Endothelial cell of umbilical vein (primary cell): ENCODE measurements at regions of chr7 and their contacts with region 1.

Region 1: DNA sequence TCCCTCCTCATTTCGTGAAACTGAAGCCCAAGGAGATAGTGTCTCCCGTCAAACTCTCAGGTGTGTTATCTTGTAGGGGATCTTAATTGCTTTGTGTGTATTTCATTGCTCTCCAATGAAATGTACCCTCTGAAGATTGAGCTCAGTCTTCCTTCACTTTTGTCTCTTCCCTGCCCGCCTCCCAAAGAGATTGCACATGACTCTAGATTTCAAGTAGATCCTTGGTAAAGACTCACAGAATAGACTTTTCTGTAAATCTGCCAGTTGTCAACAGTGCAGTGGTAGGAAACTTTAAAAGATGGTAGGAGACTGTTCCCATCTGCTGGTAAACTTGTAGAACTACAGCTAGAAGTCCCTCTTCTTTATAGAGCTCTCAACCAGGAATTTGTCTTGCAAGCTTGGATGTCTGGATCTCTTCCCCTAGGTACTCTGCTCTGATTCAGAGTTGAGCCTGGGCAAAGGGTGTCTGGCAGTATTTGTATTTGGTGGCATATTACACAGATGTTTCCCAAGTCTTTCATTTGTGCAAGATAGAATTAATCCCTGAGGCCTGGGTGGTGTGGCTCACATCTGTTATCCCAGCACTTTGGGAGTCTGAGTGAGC is 9.6 kb downstream of the CCL26 start:
- DNase-seq: peak; percentile 58
- H3K4me3 ChIP-seq: no peak overlapping the region
- H3K27ac ChIP-seq: no peak overlapping the region
- H3K4me1 ChIP-seq: no peaks in the 10 kb centered on the region
- H3K27me3 ChIP-seq: no peaks in the 10 kb centered on the region
- CTCF ChIP-seq: peak; percentile 58 to 60
- POLR2A ChIP-seq: no peak

Region 2: GRCh38 chr7:76011442-76011861 is 249.0 kb after region 1 on chr7:
- CTCF ChIA-PET with region 1: interaction called, 3 read pairs
- POLR2A ChIA-PET with region 1: no interaction called
- dilution Hi-C with region 1: no loop called
- intact Hi-C with region 1: loop called (anchors 5 kb)
- DNase-seq: peak; percentile 91
- H3K4me3 ChIP-seq: no peak overlapping the region
- H3K27ac ChIP-seq: peak overlapping the region; percentile 95
- H3K4me1 ChIP-seq: peaks cover 35% of the 10 kb centered on the region
- H3K27me3 ChIP-seq: no peaks in the 10 kb centered on the region
- CTCF ChIP-seq: no peak
- POLR2A ChIP-seq: no peak